Activated B cell treated with CpG ODN at 0.5 μM for 24 hours (primary cell): ENCODE measurements at regions of chr6 and their contacts with region 1.

Region 1: DNA sequence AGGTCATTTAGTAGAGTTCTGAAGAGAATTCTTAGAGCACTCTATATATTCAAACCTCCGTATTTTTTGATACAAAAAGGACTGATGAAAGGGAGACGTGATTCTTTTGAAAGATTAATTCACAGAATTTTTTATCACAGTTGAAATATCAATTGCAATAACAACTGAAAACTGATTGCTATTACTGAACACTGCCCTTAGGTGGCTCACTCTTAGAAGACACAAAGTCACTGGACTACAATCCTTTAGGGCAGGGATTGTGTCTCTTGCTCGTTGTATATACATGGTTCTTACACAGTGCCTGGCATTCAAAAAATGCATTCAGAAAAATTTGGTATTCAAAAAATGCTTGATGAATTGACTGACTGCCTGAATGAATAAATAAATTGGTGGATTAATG is 17.1 kb upstream of the CALHM6 start:
- DNase-seq: no peak
- ATAC-seq: peak; percentile 78
- H3K4me3 Mint-ChIP-seq: no peak overlapping the region
- H3K27ac Mint-ChIP-seq: no peak overlapping the region
- H3K4me1 Mint-ChIP-seq: peaks cover 26% of the 10 kb centered on the region
- H3K27me3 Mint-ChIP-seq: no peaks in the 10 kb centered on the region
- CTCF ChIP-seq: no peak

Region 2: GRCh38 chr6:116175344-116175743 is 268.7 kb before region 1 on chr6:
- CTCF ChIA-PET with region 1: no interaction called
- POLR2A ChIA-PET with region 1: no interaction called
- intact Hi-C with region 1: no loop called
- DNase-seq: no peak
- ATAC-seq: no peak
- H3K4me3 Mint-ChIP-seq: no peak overlapping the region
- H3K27ac Mint-ChIP-seq: no peak overlapping the region
- H3K4me1 Mint-ChIP-seq: no peaks in the 10 kb centered on the region
- H3K27me3 Mint-ChIP-seq: no peaks in the 10 kb centered on the region
- CTCF ChIP-seq: no peak

Region 3: DNA sequence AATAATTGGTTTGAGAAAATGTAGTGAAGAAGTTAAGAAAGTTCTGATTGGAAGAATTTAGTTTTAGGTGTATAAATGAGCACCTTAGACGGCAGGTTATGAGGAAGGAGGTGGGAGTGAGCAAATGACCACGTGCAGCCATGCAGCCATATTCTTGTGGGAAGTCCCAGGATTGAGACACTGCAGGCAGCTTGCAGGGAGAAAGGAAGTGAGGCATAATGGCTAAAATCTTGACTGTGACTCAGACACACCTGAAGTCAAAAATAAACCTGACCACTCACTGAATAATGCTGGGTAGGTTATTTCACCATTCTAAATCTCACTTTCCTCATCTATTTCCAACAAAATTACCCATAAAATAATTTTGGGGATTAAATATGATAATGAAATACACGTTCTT is 56.7 kb before region 1 on chr6:
- CTCF ChIA-PET with region 1: interaction called, 6 read pairs
- POLR2A ChIA-PET with region 1: interaction called, 3 read pairs
- intact Hi-C with region 1: loop called (anchors 2 kb)
- DNase-seq: no peak
- ATAC-seq: peak; percentile 53
- H3K4me3 Mint-ChIP-seq: peak overlapping the region; percentile 67
- H3K27ac Mint-ChIP-seq: peak overlapping the region; percentile 72
- H3K4me1 Mint-ChIP-seq: peaks cover 60% of the 10 kb centered on the region
- H3K27me3 Mint-ChIP-seq: no peaks in the 10 kb centered on the region
- CTCF ChIP-seq: no peak

Region 4: GRCh38 chr6:117906853-117907599 is 1462.9 kb after region 1 on chr6 and contains the start of gene SLC35F1:
- CTCF ChIA-PET with region 1: no interaction called
- POLR2A ChIA-PET with region 1: no interaction called
- intact Hi-C with region 1: no loop called
- DNase-seq: peak; percentile 17
- ATAC-seq: peak; percentile 45
- H3K4me3 Mint-ChIP-seq: peak within 1 kb of the TSS; percentile 66
- H3K27ac Mint-ChIP-seq: no peak within 1 kb of the TSS
- H3K4me1 Mint-ChIP-seq: peaks cover 10% of the 10 kb centered on the region
- H3K27me3 Mint-ChIP-seq: peaks cover 48% of the 10 kb centered on the region
- CTCF ChIP-seq: no peak
- total RNA-seq, gene SLC35F1: not detected in 2 replicates